ENCODE measurements at regions of chr2 and their contacts with region 1.

Region 1: DNA sequence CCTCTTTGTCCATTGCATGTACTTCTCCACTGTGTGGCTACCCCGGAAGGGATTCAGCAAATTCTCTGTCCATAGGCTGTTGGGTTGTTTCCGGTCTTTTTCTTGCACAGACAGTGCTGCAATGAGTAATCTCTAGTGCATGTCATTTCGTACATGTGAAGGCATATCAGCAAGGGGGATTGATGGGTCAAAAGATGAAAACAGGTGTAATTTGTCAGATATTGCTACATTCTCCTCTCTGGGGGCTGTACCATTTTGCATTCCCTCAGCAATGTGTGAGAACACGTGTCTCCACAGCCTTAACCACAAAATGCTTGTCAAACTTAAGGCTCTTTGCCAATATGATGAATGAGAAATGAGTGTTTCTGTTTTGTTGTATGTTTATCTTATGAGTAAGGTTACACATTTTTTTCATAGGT is 60.5 kb downstream of the KLHL29 start:
- DNase-seq: peak; percentile 83
- H3K4me3 ChIP-seq: no peak overlapping the region
- H3K27ac ChIP-seq: no peak overlapping the region
- H3K4me1 ChIP-seq: peaks cover 11% of the 10 kb centered on the region
- H3K27me3 ChIP-seq: peaks cover 11% of the 10 kb centered on the region
- CTCF ChIP-seq: no peak

Region 2: DNA sequence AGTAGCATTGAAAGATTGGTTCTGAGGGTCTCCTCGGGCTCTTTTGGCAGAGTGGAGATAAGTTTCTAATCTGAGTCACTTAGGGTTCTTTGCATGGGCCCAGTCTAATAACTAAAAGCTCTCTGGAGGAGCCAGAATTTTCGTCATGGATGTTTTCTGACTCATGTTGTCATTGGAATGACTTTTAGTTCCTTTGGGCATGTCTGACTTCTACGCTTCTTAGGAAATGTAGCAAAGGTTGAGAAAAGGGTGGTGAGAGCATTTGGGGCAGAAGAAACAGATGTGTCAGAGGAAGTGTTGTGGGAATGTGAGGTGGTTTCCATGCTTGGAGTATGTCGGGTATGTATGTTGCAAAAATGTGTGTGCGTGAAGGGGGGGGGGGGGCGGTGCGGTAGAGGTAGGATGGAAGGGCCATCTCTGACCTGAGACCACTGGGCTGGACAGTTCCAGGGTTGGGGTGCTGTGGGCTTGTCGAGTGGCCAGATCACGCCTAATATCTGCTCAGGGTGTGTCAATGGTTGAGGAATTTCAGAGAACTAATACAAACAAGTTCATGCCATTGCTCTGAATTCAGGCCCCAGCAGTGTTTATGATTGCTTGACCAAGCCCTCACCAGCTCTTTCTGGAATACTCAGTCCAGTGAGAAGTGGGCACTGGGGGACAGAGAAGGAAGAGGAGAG is 33.6 kb before region 1 on chr2:
- CTCF ChIA-PET with region 1: no interaction called
- dilution Hi-C with region 1: no loop called
- in situ Hi-C with region 1: no loop called
- intact Hi-C with region 1: loop called (anchors 1 kb)
- DNase-seq: peak; percentile 90
- H3K4me3 ChIP-seq: no peak overlapping the region
- H3K27ac ChIP-seq: peak overlapping the region; percentile 32
- H3K4me1 ChIP-seq: peaks cover 23% of the 10 kb centered on the region
- H3K27me3 ChIP-seq: no peaks in the 10 kb centered on the region
- CTCF ChIP-seq: no peak

Region 3: GRCh38 chr2:23731234-23731633 is 285.8 kb after region 1 on chr2:
- CTCF ChIA-PET with region 1: no interaction called
- dilution Hi-C with region 1: no loop called
- in situ Hi-C with region 1: no loop called
- intact Hi-C with region 1: no loop called
- DNase-seq: no peak
- H3K4me3 ChIP-seq: no peak overlapping the region
- H3K27ac ChIP-seq: no peak overlapping the region
- H3K4me1 ChIP-seq: no peaks in the 10 kb centered on the region
- H3K27me3 ChIP-seq: no peaks in the 10 kb centered on the region
- CTCF ChIP-seq: no peak